Activated B cell treated with CpG ODN at 0.5 μM for 24 hours (primary cell): ENCODE measurements at regions of chr2 and their contacts with region 1.

Region 1: DNA sequence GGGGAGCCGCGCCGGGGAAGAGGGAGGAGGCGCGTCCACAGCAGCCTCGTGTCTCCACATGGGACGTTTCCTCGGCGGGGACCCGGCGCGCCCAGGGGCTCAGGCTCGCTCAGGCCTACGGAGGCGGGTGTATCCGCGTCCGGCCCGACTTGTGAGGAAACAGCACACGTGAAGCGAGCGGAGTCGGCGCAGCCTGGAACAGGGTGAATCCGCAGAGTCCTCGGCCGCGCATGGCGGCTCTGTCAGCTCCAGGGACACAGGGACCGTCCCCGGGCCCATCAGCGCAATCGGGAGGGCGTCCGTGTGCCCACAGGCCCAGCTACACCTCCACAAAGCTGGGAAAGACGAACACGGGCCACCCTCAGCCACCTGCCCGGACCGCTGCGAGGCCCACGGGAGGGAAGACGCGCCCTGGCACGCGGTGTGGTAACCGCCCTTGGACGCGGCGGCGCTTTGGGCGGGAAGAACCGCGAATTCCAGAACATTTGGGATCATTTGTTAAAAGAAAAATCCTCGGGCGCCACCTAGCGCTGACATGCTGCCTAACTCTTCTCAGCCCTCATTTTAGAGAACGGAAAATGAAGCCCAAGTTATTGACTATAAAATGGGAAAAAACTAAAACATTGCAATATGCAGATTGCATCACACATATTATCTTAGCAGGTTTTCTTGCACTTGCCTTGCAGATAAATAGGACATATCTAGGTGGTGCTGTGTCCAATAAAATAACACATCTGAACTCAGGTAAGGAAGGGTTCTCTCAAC is 40.4 kb downstream of the TMEM18 start:
- DNase-seq: peak; percentile 54
- ATAC-seq: peak; percentile 71
- H3K4me3 Mint-ChIP-seq: peak overlapping the region; percentile 83
- H3K27ac Mint-ChIP-seq: peak overlapping the region; percentile 54
- H3K4me1 Mint-ChIP-seq: peaks cover 4% of the 10 kb centered on the region
- H3K27me3 Mint-ChIP-seq: no peaks in the 10 kb centered on the region
- CTCF ChIP-seq: peak; percentile 77

Region 2: DNA sequence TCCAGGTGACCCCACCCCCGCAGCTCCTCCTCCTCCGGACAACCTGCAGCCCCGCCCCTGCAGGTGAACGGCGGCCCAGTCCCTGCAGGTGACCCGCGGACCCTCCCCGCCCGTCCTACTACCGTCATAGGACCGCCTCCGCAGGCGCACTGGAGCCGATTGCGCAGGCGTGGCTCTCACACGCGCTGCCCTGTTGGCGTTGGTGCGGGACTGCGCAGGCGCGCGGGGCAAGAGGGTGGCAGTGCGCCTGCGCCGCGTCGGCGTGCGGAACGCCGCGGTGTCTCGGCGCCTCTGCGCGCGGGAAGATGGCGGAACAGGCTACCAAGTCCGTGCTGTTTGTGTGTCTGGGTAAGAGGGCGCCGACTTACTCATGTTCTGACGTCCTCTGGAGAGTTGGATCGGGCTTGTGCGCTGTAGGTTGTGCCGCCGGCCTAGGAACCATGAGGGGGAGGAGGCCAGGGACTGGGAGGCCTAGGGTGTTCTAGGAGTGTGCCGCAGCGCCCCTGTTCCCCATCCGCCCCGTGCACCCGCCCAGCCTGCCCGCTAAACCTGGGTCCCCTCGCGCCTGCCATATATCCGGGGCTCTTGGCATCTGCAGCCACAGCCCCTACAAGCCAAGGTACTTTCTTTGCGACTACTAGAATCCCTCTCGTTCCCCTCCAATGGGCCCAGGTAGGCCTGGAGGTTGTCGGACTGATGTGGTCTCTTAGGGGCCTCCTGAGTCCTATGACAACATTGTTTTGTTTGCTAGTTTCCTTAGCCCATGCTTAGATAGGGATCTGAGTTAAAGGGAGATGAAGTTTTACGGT is 372.0 kb before region 1 on chr2 and contains the start of gene ACP1:
- CTCF ChIA-PET with region 1: no interaction called
- POLR2A ChIA-PET with region 1: no interaction called
- intact Hi-C with region 1: loop called (anchors 5 kb)
- DNase-seq: peak; percentile 95
- ATAC-seq: peak; percentile 85
- H3K4me3 Mint-ChIP-seq: peak within 1 kb of the TSS; percentile 93
- H3K27ac Mint-ChIP-seq: peak within 1 kb of the TSS; percentile 93
- H3K4me1 Mint-ChIP-seq: peaks cover 50% of the 10 kb centered on the region
- H3K27me3 Mint-ChIP-seq: no peaks in the 10 kb centered on the region
- CTCF ChIP-seq: no peak
- total RNA-seq, gene ACP1: 80.1 and 81.8 TPM in 2 replicates

Region 3: DNA sequence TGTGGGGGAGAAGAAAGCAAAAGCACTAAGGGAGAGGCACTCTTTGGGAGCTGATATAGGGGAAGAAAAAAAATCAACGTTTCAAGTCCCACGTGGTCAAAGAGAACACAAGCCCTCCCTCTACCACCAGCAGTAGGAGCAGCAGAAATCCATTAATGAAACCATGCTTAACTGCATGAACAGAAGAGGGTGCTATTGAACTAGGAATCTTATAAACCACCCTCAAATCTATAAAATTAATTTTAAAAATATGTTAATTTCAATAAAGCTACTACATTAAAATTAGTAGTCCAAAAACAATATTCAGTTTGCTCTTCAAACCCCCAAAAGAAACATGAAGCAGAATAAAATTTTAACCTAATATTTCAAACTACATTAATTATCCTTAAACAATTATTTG is 107.4 kb before region 1 on chr2:
- CTCF ChIA-PET with region 1: interaction called, 38 read pairs
- POLR2A ChIA-PET with region 1: no interaction called
- intact Hi-C with region 1: loop called (anchors 1 kb)
- DNase-seq: no peak
- ATAC-seq: peak; percentile 56
- H3K4me3 Mint-ChIP-seq: no peak overlapping the region
- H3K27ac Mint-ChIP-seq: no peak overlapping the region
- H3K4me1 Mint-ChIP-seq: peaks cover 2% of the 10 kb centered on the region
- H3K27me3 Mint-ChIP-seq: no peaks in the 10 kb centered on the region
- CTCF ChIP-seq: peak; percentile 56

Region 4: DNA sequence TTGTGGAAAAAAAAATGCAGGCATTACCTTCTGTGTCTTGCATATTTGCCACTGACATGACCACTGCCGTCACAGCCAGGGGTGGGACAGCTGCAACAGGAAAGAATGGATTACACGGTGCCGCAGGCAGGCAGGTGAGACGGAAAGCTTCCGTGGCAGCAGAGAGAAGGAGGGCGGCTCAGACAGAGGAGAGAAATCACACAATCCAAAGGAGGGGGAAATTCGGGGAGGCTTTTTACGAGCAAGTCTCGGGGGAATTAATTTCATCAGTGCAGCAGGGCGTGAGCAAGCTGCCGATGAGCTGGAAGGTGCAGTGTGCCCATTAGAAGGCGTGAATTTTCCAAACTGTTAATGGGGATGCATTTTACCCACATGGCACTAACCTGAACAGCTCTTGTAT is 1342.3 kb after region 1 on chr2:
- CTCF ChIA-PET with region 1: no interaction called
- POLR2A ChIA-PET with region 1: no interaction called
- intact Hi-C with region 1: no loop called
- DNase-seq: no peak
- ATAC-seq: no peak
- H3K4me3 Mint-ChIP-seq: no peak overlapping the region
- H3K27ac Mint-ChIP-seq: no peak overlapping the region
- H3K4me1 Mint-ChIP-seq: no peaks in the 10 kb centered on the region
- H3K27me3 Mint-ChIP-seq: no peaks in the 10 kb centered on the region
- CTCF ChIP-seq: no peak